ENCODE measurements at regions of chr19 and their contacts with region 1.

Region 1: GRCh38 chr19:46600384-46601317 is 479 bp upstream of the CALM3 start:
- DNase-seq: peak; percentile 95 to 98 (median 98)
- H3K4me3 ChIP-seq: peak overlapping the region; percentile 90 to 99 (median 93)
- H3K4me3 Mint-ChIP-seq: peak overlapping the region; percentile 95 to 97
- H3K27ac ChIP-seq: peak overlapping the region; percentile 99 to 100
- H3K27ac Mint-ChIP-seq: peak overlapping the region; percentile 100
- H3K4me1 ChIP-seq: peaks cover 30 to 36% of the 10 kb centered on the region in 2 donors
- H3K4me1 Mint-ChIP-seq: peaks cover 34% of the 10 kb centered on the region
- H3K27me3 ChIP-seq: no peaks in the 10 kb centered on the region
- H3K27me3 Mint-ChIP-seq: peaks cover 4 to 14% (median 5%) of the 10 kb centered on the region in 3 donors
- CTCF ChIP-seq: no peak

Region 2: GRCh38 chr19:46551164-46551563 is 49.5 kb before region 1 on chr19:
- intact Hi-C with region 1: loop called in 1 of 2 experiments (anchors 10 kb)
- DNase-seq: peak; percentile 62 to 77 (median 67)
- H3K4me3 ChIP-seq: peak overlapping the region in 1 of 3 experiments; percentile 28
- H3K4me3 Mint-ChIP-seq: peak overlapping the region in 1 of 2 donors; percentile 55
- H3K27ac ChIP-seq: peak overlapping the region in 1 of 2 donors; percentile 77
- H3K27ac Mint-ChIP-seq: peak overlapping the region; percentile 83 to 94 (median 87)
- H3K4me1 ChIP-seq: peaks cover 35 to 54% of the 10 kb centered on the region in 2 donors
- H3K4me1 Mint-ChIP-seq: peaks cover 42% of the 10 kb centered on the region
- H3K27me3 ChIP-seq: no peaks in the 10 kb centered on the region
- H3K27me3 Mint-ChIP-seq: peaks cover 0 to 5% (median 2%) of the 10 kb centered on the region in 3 donors
- CTCF ChIP-seq: no peak

Measured in CD14-positive monocyte (primary cell).